ENCODE measurements at regions of chr17 and their contacts with region 1.

Region 1: DNA sequence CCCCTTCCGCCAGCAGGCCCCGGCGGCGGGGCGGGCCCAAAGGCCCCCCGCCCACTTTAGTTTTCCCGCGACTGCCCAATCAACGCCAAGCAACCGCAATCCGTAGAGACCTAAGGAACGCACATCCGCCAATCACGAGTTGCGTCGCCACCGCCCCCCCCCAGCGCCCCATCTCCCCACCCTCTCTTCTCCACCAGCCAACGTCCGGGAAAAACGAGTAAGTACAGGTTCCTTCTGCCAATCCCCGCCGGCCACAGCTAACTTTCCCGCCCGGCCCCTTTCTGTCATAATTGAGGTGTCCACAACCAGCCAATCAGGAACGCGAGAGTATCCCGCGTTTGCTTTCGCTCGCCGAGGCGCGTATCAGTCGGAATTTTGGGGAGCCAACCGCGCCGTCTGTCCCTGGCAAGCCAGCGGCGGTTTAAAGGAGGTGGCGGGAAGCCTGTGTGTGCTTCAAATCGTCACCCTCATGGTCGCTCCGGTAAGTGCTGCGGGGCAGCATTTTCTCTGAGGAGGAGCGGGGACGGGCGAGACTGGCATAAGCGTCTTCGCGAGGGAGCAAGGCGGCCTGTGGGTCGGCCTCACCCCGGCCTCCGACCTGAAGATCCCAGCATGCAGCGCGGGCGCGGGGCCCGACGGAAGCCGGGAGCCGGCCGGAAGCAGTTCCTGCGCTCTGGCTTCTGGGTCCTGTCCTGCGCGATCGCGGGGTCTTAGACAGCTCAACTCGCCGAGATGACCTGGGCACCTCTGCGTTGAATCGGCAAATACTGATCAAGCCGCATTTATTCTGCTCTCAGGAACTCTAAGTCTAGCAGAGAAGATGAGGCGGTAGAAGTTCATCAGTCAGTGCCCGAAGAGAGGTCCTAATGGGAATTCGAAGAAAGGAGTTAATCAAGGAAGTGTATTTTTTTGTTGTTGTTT is at the start of gene MIS12:
- DNase-seq: peak; percentile 100
- ATAC-seq: peak; percentile 91
- H3K4me3 Mint-ChIP-seq: peak within 1 kb of the TSS; percentile 96
- H3K27ac Mint-ChIP-seq: peak within 1 kb of the TSS; percentile 99
- H3K4me1 Mint-ChIP-seq: peaks cover 48% of the 10 kb centered on the region
- H3K27me3 Mint-ChIP-seq: no peaks in the 10 kb centered on the region
- total RNA-seq, gene MIS12: 36.1 to 40.0 TPM

Region 2: DNA sequence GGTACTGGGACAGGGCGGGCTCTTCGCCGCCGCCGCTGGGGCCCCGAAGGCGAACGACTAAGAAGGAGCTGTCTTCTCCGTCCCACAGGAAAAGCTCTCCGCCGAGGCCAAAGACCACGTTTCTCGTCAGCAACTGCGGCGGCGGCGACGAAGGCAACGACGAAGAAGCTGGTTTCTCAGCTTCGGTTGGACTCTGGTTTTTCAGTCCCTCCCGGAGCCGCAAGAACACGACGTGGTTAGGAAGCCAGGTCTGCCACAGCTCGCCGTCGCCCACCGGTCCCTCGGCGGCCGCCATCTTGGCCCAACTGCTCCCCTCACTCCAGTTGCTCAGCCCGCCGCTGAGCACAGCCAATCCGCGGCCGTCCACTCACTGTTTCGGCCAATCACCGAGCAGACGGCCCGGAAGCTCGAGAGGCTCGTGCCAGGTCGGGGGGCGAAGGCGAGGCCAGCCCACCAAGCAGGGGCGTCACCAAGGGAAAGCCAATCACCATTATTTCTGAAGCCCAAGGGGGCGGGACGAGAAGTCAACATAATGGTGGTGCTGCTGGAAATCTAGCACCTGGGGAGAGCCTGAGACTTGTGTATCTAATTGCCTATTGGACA is 67.0 kb before region 1 on chr17 and contains the start of gene NUP88:
- CTCF ChIA-PET with region 1: no interaction called
- POLR2A ChIA-PET with region 1: interaction called, 15 read pairs
- DNase-seq: peak; percentile 98
- ATAC-seq: peak; percentile 97
- H3K4me3 Mint-ChIP-seq: peak within 1 kb of the TSS; percentile 100
- H3K27ac Mint-ChIP-seq: peak within 1 kb of the TSS; percentile 99
- H3K4me1 Mint-ChIP-seq: peaks cover 47% of the 10 kb centered on the region
- H3K27me3 Mint-ChIP-seq: no peaks in the 10 kb centered on the region
- total RNA-seq, gene NUP88: 97.2 to 105 TPM

Region 3: GRCh38 chr17:5468075-5468473 is 18.4 kb before region 1 on chr17:
- CTCF ChIA-PET with region 1: interaction called, 5 read pairs
- POLR2A ChIA-PET with region 1: interaction called, 27 read pairs
- DNase-seq: peak; percentile 26
- ATAC-seq: peak; percentile 28
- H3K4me3 Mint-ChIP-seq: peak overlapping the region; percentile 80
- H3K27ac Mint-ChIP-seq: peak overlapping the region; percentile 79
- H3K4me1 Mint-ChIP-seq: peaks cover 39% of the 10 kb centered on the region
- H3K27me3 Mint-ChIP-seq: no peaks in the 10 kb centered on the region

Region 4: DNA sequence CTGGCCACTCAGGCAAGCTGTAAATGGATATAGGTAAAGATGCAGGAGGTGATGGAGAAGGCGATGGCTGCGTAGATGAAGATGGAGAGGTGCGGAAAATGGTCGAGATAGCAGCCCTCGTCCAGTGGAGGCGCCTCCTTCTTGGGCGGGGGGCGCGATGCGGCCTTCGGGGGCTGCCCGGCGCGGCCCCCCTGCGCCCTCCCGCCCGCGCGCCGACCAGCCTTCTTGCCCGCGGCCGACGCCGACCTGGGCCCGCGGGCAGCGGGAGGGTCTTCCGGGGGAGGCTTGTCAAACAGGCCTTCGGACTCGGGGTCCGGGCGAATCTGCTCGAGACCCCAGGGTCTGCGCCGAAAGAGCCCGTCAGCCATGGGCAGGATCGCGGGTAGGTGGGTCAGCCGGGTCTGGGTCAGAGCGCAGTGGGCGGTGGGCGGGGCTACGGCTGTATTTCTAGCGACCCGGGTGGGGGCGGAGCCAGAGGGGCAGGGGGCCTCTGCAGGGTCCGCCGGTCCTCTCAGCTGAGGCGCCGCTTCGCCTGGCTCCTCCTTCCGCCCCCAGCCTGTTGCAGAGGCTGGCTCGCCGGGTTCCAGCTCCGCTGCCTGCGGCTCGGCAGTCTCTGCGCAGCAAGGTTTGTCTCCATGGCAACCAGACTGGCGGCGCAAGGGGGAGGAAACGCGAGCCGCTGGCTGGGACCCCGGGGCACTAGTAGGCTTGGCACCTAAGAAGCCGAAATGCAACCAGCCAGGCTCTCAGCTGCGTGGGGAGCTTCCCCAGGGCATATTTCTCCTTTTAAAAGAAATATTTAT is 14.3 kb after region 1 on chr17:
- CTCF ChIA-PET with region 1: interaction called, 20 read pairs
- POLR2A ChIA-PET with region 1: interaction called, 37 read pairs
- DNase-seq: peak; percentile 85
- ATAC-seq: peak; percentile 97
- H3K4me3 Mint-ChIP-seq: peak overlapping the region; percentile 81
- H3K27ac Mint-ChIP-seq: peak overlapping the region; percentile 26
- H3K4me1 Mint-ChIP-seq: peaks cover 16% of the 10 kb centered on the region
- H3K27me3 Mint-ChIP-seq: peaks cover 2% of the 10 kb centered on the region

Region 5: GRCh38 chr17:5584383-5585286 is 98.2 kb after region 1 on chr17 and contains the start of gene NLRP1:
- CTCF ChIA-PET with region 1: no interaction called
- POLR2A ChIA-PET with region 1: interaction called, 18 read pairs
- DNase-seq: peak; percentile 98
- ATAC-seq: peak; percentile 95
- H3K4me3 Mint-ChIP-seq: peak within 1 kb of the TSS; percentile 96
- H3K27ac Mint-ChIP-seq: peak within 1 kb of the TSS; percentile 96
- H3K4me1 Mint-ChIP-seq: peaks cover 56% of the 10 kb centered on the region
- H3K27me3 Mint-ChIP-seq: peaks cover 5% of the 10 kb centered on the region
- total RNA-seq, gene NLRP1: 44.5 to 46.1 TPM

Measured in activated CD8-positive, alpha-beta T cell treated with anti-CD3 and anti-CD28 coated beads, Interleukin-2, amount 10 ng/mL, durations not matched to agents 7 days and 5 days (primary cell).